ENCODE measurements at regions of chr11 and their contacts with region 1.

Region 1: GRCh38 chr11:47176328-47177228 is at the start of gene ARFGAP2:
- DNase-seq: peak; percentile 84
- ATAC-seq: peak; percentile 90
- H3K4me3 ChIP-seq: peak within 1 kb of the TSS; percentile 91 to 98 (median 93)
- H3K27ac ChIP-seq: peak within 1 kb of the TSS; percentile 84
- H3K4me1 ChIP-seq: peaks cover 62% of the 10 kb centered on the region
- H3K27me3 ChIP-seq: no peaks in the 10 kb centered on the region; a peak in 1 of 5 replicates
- CTCF ChIP-seq: no peak
- EP300 ChIP-seq: no peak
- POLR2A ChIP-seq: peak in 1 of 2 experiments; percentile 54; a peak in 1 of 4 replicates
- RAD21 ChIP-seq: no peak
- total RNA-seq, gene ARFGAP2: 67.9 and 75.3 TPM in 2 replicates

Region 2: GRCh38 chr11:47191865-47192521 is 15.4 kb after region 1 on chr11:
- CTCF ChIA-PET with region 1: no interaction called
- POLR2A ChIA-PET with region 1: interaction called, 81 read pairs
- in situ Hi-C with region 1: no loop called
- intact Hi-C with region 1: loop called (anchors 1 kb)
- DNase-seq: no peak
- ATAC-seq: no peak
- H3K4me3 ChIP-seq: no peak overlapping the region
- H3K27ac ChIP-seq: no peak overlapping the region
- H3K4me1 ChIP-seq: peaks cover 56% of the 10 kb centered on the region
- H3K27me3 ChIP-seq: no peaks in the 10 kb centered on the region
- CTCF ChIP-seq: no peak
- EP300 ChIP-seq: no peak
- POLR2A ChIP-seq: no peak
- RAD21 ChIP-seq: no peak

Region 3: DNA sequence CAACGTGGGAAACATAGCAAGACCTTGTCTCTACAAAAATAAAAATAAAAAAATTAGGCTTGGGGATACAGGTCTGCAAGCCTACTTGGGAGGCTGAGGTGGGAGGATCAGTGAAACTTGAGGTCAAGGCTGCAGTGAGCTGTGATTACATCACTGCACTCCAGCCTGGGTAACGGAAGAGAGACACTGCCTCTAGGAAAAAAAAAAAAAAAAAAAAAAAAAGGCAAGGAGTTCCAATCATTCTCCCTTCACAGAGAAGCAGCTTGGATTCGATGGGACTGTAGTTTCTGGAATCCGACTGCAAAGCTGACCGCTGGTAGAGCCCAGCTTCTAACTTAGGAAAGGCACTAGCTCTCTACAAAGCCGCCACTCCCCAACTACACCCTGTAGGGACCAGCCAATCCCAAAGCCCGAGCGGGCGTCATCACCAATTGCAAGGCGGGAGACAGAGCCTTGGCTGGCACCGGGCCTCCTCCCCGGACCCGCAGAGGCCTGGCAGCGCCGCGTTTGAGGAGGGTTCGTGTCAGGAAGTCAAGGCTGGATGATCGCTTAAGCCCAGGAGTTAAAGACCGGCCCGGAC is 37.5 kb after region 1 on chr11:
- CTCF ChIA-PET with region 1: no interaction called
- POLR2A ChIA-PET with region 1: interaction called, 51 read pairs
- in situ Hi-C with region 1: no loop called
- intact Hi-C with region 1: loop called (anchors 1 kb)
- DNase-seq: peak; percentile 86
- ATAC-seq: peak; percentile 90
- H3K4me3 ChIP-seq: peak overlapping the region; percentile 70 to 86 (median 79)
- H3K27ac ChIP-seq: peak overlapping the region; percentile 73
- H3K4me1 ChIP-seq: peaks cover 57% of the 10 kb centered on the region
- H3K27me3 ChIP-seq: no peaks in the 10 kb centered on the region; a peak in 1 of 5 replicates
- CTCF ChIP-seq: no peak
- EP300 ChIP-seq: no peak
- POLR2A ChIP-seq: peak; percentile 21 to 58; a peak in 3 of 4 replicates
- RAD21 ChIP-seq: no peak

Measured in HepG2 (cell line).